Right ventricle myocardium inferior (tissue), 1 donor: ENCODE measurements at regions of chr10 and their contacts with region 1.

Region 1: GRCh38 chr10:110007701-110008517 is at the start of gene ADD3:
- DNase-seq: peak; percentile 97
- ATAC-seq: peak; percentile 92
- total RNA-seq, gene ADD3: 121 TPM

Region 2: GRCh38 chr10:109922976-109923921 is 84.7 kb before region 1 on chr10 and contains the start of gene XPNPEP1:
- intact Hi-C with region 1: loop called (anchors 5 kb)
- DNase-seq: peak; percentile 96
- ATAC-seq: peak; percentile 98
- total RNA-seq, gene XPNPEP1: 43.6 TPM

Region 3: GRCh38 chr10:110076559-110077318 is 68.8 kb after region 1 on chr10:
- intact Hi-C with region 1: loop called (anchors 2 kb)
- DNase-seq: no peak
- ATAC-seq: peak; percentile 91

Region 4: DNA sequence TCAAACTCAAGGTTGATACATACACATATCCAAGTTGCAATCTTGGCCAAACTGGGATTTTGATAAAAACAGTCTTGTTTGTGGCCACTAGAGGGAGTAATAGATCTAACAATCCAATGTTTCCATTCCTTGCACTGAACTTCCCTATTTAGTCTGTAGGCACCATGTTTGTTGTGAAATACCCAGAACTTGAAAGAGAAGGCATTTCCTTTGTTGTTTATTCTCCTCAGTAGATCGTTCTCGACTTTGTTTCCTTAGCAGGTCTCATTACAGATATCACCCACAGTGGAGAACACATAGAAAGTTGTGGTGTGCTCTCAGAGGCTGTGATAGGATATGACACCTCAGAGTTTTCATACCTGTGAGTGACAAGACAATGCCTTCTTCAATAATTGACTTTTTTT is 129.2 kb after region 1 on chr10:
- intact Hi-C with region 1: loop called (anchors 5 kb)
- DNase-seq: no peak
- ATAC-seq: peak; percentile 76

Region 5: GRCh38 chr10:110279407-110279986 is 271.6 kb after region 1 on chr10:
- intact Hi-C with region 1: loop called (anchors 10 kb)
- DNase-seq: no peak
- ATAC-seq: peak; percentile 76